Common myeloid progenitor, CD34-positive (primary cell): ENCODE measurements at regions of chr10 and their contacts with region 1.

Region 1: DNA sequence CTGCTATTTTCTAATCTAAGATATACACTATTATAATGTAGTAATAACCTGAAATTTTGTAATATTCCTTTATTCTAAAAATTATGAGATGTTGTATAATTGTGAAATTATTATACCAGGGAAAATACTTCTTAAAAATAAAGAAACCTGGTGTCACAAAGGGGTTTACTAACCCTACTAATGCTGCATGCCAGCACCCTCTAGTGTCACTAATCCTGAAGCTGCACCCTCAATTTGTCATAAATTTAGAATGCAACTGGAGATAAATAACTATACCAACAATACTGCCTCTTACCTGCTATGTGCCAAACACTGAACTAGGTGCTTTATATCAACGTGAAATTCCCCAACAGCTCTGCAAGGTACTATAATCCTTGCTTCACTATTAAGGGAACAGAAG is 30.8 kb downstream of the TM9SF3 start:
- DNase-seq: peak; percentile 30 to 59 (median 54)
- H3K4me3 ChIP-seq: no peak overlapping the region
- H3K27ac ChIP-seq: no peak overlapping the region
- H3K4me1 ChIP-seq: no peaks in the 10 kb centered on the region
- H3K27me3 ChIP-seq: no peaks in the 10 kb centered on the region

Region 2: DNA sequence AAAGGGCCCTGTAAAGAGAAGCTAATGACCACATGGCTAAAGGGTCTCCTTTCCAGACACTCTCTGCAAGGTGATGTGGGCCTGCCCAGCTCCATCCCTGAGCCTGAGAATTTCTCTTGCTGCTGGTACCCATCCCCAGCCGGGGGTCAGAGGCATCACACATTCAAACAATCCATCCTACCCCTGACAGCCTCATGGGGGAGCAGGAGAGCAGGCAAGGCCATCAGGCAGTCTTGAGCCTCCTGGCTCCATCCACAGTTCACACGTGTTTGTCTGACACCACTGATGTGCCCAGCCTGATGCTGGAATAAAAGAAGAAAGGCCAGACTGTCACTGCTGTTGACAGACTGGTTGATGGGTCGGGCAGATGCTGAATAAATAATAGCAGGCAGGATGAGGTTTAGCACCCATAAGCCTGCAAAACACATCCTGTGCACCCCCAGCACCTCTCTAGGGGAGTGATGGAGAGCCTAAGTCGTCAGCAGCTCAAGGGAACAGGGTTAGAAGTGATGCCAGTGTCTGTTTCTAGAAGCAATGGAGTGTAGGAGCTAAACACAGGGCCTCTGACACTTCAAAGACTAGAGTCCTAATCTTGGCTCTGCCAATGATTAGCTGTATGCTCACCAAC is 85.8 kb before region 1 on chr10:
- CTCF ChIA-PET with region 1: no interaction called
- POLR2A ChIA-PET with region 1: no interaction called
- DNase-seq: peak; percentile 21 to 55 (median 54)
- H3K4me3 ChIP-seq: no peak overlapping the region
- H3K27ac ChIP-seq: no peak overlapping the region
- H3K4me1 ChIP-seq: no peaks in the 10 kb centered on the region
- H3K27me3 ChIP-seq: peaks cover 0 to 9% (median 3%) of the 10 kb centered on the region in 5 experiments

Region 3: GRCh38 chr10:96532496-96532895 is 23.5 kb before region 1 on chr10:
- CTCF ChIA-PET with region 1: interaction called, 10 read pairs
- POLR2A ChIA-PET with region 1: no interaction called
- DNase-seq: no peak
- H3K4me3 ChIP-seq: no peak overlapping the region
- H3K27ac ChIP-seq: no peak overlapping the region
- H3K4me1 ChIP-seq: peaks cover 0 to 6% (median under 1%) of the 10 kb centered on the region in 4 experiments
- H3K27me3 ChIP-seq: no peaks in the 10 kb centered on the region